Activated naive CD4-positive, alpha-beta T cell treated with anti-CD3 and anti-CD28 coated beads for 36 hours (primary cell): ENCODE measurements at regions of chr2 and their contacts with region 1.

Region 1: GRCh38 chr2:143290221-143290620 is 161.0 kb downstream of the ARHGAP15 start:
- DNase-seq: no peak
- H3K4me3 Mint-ChIP-seq: no peak overlapping the region
- H3K27ac Mint-ChIP-seq: no peak overlapping the region
- H3K4me1 Mint-ChIP-seq: peaks cover 22% of the 10 kb centered on the region
- H3K27me3 Mint-ChIP-seq: no peaks in the 10 kb centered on the region

Region 2: DNA sequence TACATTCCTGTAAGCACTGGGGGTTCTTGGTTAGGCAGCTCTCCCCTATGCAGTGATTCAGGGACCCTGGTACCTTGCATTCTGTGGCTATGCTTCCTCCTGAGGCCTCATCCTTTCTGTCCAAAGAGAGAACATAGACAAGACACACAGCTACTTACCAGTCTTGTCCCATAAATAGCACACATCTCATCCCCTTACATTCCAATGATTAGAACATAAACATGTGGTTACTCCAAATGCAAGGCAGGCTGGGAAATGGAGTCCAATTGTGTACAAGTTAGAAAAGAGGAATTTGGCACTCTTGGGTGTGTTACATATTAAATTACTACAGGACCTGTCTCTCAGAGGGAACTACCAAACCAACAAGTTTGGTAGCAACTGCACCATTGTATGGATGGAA is 10.3 kb after region 1 on chr2:
- CTCF ChIA-PET with region 1: no interaction called
- intact Hi-C with region 1: loop called (anchors 1 kb)
- DNase-seq: no peak
- H3K4me3 Mint-ChIP-seq: no peak overlapping the region
- H3K27ac Mint-ChIP-seq: no peak overlapping the region
- H3K4me1 Mint-ChIP-seq: peaks cover 11% of the 10 kb centered on the region
- H3K27me3 Mint-ChIP-seq: no peaks in the 10 kb centered on the region

Region 3: GRCh38 chr2:143553261-143553660 is 263.0 kb after region 1 on chr2:
- CTCF ChIA-PET with region 1: no interaction called
- intact Hi-C with region 1: no loop called
- DNase-seq: peak; percentile 35
- H3K4me3 Mint-ChIP-seq: no peak overlapping the region
- H3K27ac Mint-ChIP-seq: no peak overlapping the region
- H3K4me1 Mint-ChIP-seq: peaks cover 3% of the 10 kb centered on the region
- H3K27me3 Mint-ChIP-seq: no peaks in the 10 kb centered on the region

Region 4: DNA sequence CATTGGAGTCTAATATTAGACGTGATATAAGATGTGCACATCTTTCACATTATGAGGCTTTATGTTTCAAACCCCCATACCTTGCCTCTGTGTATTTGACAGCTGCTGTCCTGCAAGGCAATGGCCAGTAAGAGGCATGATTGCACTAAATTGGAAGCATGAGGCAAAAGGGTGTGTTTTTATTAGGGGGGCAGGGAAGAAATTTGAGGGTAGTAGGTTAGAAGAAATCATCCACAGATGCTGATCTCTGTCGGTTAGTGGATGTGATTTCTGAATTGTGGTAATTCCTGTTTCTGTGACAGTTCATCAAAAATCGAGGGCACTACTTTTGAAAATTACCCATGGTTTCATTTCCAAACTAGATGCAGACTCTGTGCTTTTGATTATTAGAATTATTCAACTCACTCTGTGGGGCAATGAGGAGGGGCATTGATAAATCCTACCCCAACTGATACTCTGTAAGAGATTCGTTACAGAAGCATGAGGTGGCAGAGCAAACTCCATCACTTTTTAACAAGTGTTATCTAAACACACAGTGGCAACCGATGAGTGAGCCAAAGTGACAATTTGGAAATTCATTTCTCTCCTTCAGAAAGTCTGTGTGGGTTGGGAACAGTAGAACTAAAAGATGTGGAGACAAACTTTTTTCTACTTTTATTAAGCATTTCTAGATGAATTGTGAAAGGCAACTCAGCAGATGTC is 292.0 kb after region 1 on chr2:
- CTCF ChIA-PET with region 1: no interaction called
- intact Hi-C with region 1: no loop called
- DNase-seq: no peak
- H3K4me3 Mint-ChIP-seq: no peak overlapping the region
- H3K27ac Mint-ChIP-seq: no peak overlapping the region
- H3K4me1 Mint-ChIP-seq: peaks cover 18% of the 10 kb centered on the region
- H3K27me3 Mint-ChIP-seq: no peaks in the 10 kb centered on the region